HepG2 (cell line): ENCODE measurements at regions of chr7 and their contacts with region 1.

Region 1: GRCh38 chr7:11237742-11238141 is 264.1 kb downstream of the PHF14 start:
- DNase-seq: no peak
- ATAC-seq: peak; percentile 91
- H3K4me3 ChIP-seq: peak overlapping the region; percentile 59 to 66 (median 59)
- H3K27ac ChIP-seq: no peak overlapping the region
- H3K4me1 ChIP-seq: no peaks in the 10 kb centered on the region
- H3K27me3 ChIP-seq: no peaks in the 10 kb centered on the region; a peak in 1 of 5 replicates
- CTCF ChIP-seq: no peak
- EP300 ChIP-seq: no peak
- POLR2A ChIP-seq: no peak
- RAD21 ChIP-seq: no peak

Region 2: DNA sequence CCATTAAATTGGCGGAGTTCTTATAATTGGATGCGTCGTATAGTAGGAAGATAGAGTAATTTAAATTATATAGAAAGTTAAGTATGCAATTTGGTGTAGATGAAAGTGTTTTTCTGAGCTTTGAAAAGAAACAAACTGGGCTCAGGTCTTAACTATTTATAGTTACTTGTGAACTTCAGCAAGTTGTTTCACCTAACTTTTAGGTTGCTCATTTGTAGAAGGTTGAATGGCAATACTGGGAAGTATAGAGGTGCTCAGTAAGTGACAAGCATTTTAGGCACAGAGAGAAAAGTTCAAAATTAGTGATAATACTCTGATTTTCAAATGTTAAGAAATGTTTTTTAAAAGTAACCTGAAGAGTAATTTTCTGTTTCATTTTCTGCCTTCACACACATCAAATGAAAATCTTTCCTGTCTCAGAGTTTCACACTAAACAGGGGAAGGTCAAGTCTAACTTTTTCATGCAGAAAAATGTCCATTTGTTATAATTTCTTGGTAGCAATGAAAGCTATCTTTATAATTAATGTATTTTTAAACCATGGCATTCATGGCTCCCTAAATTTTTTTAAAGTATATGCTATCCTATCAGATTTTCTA is 117.6 kb before region 1 on chr7:
- CTCF ChIA-PET with region 1: no interaction called
- POLR2A ChIA-PET with region 1: no interaction called
- in situ Hi-C with region 1: no loop called
- intact Hi-C with region 1: no loop called
- DNase-seq: no peak
- ATAC-seq: no peak
- H3K4me3 ChIP-seq: no peak overlapping the region
- H3K27ac ChIP-seq: no peak overlapping the region
- H3K4me1 ChIP-seq: no peaks in the 10 kb centered on the region
- H3K27me3 ChIP-seq: no peaks in the 10 kb centered on the region
- CTCF ChIP-seq: no peak
- EP300 ChIP-seq: no peak
- POLR2A ChIP-seq: no peak
- RAD21 ChIP-seq: no peak

Region 3: GRCh38 chr7:11141541-11141940 is 96.2 kb before region 1 on chr7:
- CTCF ChIA-PET with region 1: no interaction called
- POLR2A ChIA-PET with region 1: no interaction called
- in situ Hi-C with region 1: no loop called
- intact Hi-C with region 1: no loop called
- DNase-seq: no peak
- ATAC-seq: no peak
- H3K4me3 ChIP-seq: no peak overlapping the region
- H3K27ac ChIP-seq: no peak overlapping the region
- H3K4me1 ChIP-seq: no peaks in the 10 kb centered on the region
- H3K27me3 ChIP-seq: no peaks in the 10 kb centered on the region
- CTCF ChIP-seq: no peak
- EP300 ChIP-seq: no peak
- POLR2A ChIP-seq: no peak
- RAD21 ChIP-seq: no peak

Region 4: GRCh38 chr7:11182736-11183135 is 55.0 kb before region 1 on chr7:
- CTCF ChIA-PET with region 1: no interaction called
- POLR2A ChIA-PET with region 1: no interaction called
- in situ Hi-C with region 1: no loop called
- intact Hi-C with region 1: no loop called
- DNase-seq: no peak
- ATAC-seq: no peak
- H3K4me3 ChIP-seq: no peak overlapping the region
- H3K27ac ChIP-seq: no peak overlapping the region
- H3K4me1 ChIP-seq: no peaks in the 10 kb centered on the region
- H3K27me3 ChIP-seq: no peaks in the 10 kb centered on the region
- CTCF ChIP-seq: no peak
- EP300 ChIP-seq: no peak
- POLR2A ChIP-seq: no peak
- RAD21 ChIP-seq: no peak

Region 5: GRCh38 chr7:11328309-11328708 is 90.6 kb after region 1 on chr7:
- CTCF ChIA-PET with region 1: no interaction called
- POLR2A ChIA-PET with region 1: no interaction called
- in situ Hi-C with region 1: no loop called
- intact Hi-C with region 1: loop called (anchors 10 kb)
- DNase-seq: no peak
- ATAC-seq: no peak
- H3K4me3 ChIP-seq: no peak overlapping the region
- H3K27ac ChIP-seq: no peak overlapping the region
- H3K4me1 ChIP-seq: no peaks in the 10 kb centered on the region
- H3K27me3 ChIP-seq: no peaks in the 10 kb centered on the region; a peak in 1 of 5 replicates
- CTCF ChIP-seq: no peak
- EP300 ChIP-seq: no peak
- POLR2A ChIP-seq: no peak
- RAD21 ChIP-seq: no peak